H1 (cell line): ENCODE measurements at regions of chr11 and their contacts with region 1.

Region 1: DNA sequence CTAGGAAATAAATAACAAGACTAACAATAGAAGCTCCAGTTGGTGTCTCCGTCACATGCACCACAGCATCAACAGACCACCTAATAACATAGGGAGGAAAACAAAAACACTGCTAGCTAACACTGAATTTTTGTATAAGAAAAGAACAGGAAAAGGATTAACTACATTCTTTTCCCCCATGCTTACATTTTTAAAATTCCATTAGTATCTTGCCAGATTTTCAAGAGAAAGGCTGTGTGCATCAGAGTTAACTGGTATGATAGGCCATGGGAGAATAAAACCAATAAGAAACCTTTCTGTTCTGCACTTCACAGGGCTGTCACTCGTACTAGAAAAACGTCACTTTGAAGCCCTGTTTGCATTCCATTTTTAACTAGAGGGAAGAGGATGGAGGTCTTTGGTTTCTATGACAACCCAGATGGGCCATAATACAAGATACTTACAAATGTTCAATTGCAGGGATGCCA is 79.0 kb downstream of the LARGE2 start:
- DNase-seq: no peak
- H3K4me3 ChIP-seq: peak overlapping the region in 1 of 4 experiments; percentile 40; a peak in 3 of 8 replicates
- H3K27ac ChIP-seq: peak overlapping the region; percentile 87; the same call in 1 of the 2 replicates
- H3K4me1 ChIP-seq: peaks cover 3 to 24% (median 14%) of the 10 kb centered on the region in 4 experiments; a peak in 6 of 7 replicates
- H3K27me3 ChIP-seq: no peaks in the 10 kb centered on the region
- CTCF ChIP-seq: no peak
- EP300 ChIP-seq: peak in 1 of 2 experiments; percentile 87; a peak in 1 of 3 replicates
- POLR2A ChIP-seq: no peak
- RAD21 ChIP-seq: no peak

Region 2: DNA sequence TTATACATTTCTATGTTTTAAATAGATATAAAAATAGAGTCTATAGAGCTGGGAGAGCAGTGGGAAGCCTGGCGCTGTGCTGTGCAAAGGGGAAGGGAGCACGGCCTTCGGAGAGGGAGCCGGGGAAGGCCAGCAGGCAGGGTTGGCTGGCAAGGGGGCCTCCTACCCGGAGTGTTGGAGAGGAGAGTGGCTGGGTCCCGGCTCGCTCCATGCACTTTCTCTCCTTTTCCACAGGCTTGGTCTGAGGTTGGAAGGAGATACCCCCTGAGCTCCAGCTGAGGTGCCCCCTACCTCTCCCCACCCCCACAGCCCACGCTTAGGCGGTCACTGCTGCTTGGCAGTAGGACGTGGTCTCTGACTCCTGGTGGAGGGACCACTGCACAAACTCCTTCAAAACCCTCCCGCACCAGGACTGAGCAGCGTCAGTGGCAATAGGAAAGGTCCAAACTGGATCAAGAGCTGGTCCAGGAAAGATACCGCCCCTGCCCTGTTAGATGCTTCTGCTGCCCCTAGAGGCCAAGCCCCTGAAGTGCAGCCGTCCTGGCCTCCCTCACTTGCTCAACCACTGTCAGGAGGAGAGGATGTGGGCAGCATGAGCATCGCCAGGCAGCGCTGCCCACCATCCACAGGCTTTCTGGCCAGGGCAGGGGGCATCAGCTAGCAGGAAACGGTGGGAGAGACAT is 768.2 kb before region 1 on chr11:
- CTCF ChIA-PET with region 1: no interaction called
- POLR2A ChIA-PET with region 1: no interaction called
- DNase-seq: peak; percentile 53 to 94
- H3K4me3 ChIP-seq: peak overlapping the region in 1 of 4 experiments; percentile 22; a peak in 1 of 8 replicates
- H3K27ac ChIP-seq: no peak overlapping the region
- H3K4me1 ChIP-seq: peaks cover 0 to 4% (median 2%) of the 10 kb centered on the region in 4 experiments; a peak in 2 of 7 replicates
- H3K27me3 ChIP-seq: no peaks in the 10 kb centered on the region
- CTCF ChIP-seq: peak; percentile 73 to 98 (median 94)
- EP300 ChIP-seq: no peak
- POLR2A ChIP-seq: no peak
- RAD21 ChIP-seq: peak; percentile 52 to 59

Region 3: DNA sequence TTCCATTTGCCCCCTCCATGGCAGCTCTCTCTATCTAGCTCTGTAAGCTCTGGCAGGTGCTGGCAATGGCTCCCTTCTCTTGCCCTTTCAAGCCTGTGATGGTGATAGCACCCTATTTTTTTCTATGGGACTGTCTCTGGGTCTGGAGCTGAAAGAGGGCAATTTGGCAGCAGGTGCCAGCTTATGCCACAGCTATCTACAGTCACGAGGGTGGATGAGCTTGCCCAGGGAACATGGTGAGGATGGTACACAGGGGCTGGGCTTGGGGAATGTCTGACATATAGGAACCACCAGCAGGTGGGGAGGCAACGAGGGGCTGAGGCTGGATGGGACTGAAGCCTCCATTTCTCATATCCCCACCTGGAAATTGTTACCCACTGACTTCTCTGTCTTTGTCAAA is 540.0 kb before region 1 on chr11:
- CTCF ChIA-PET with region 1: no interaction called
- POLR2A ChIA-PET with region 1: no interaction called
- DNase-seq: no peak
- H3K4me3 ChIP-seq: no peak overlapping the region
- H3K27ac ChIP-seq: no peak overlapping the region
- H3K4me1 ChIP-seq: no peaks in the 10 kb centered on the region
- H3K27me3 ChIP-seq: no peaks in the 10 kb centered on the region
- CTCF ChIP-seq: no peak
- EP300 ChIP-seq: no peak
- POLR2A ChIP-seq: no peak
- RAD21 ChIP-seq: no peak

Region 4: DNA sequence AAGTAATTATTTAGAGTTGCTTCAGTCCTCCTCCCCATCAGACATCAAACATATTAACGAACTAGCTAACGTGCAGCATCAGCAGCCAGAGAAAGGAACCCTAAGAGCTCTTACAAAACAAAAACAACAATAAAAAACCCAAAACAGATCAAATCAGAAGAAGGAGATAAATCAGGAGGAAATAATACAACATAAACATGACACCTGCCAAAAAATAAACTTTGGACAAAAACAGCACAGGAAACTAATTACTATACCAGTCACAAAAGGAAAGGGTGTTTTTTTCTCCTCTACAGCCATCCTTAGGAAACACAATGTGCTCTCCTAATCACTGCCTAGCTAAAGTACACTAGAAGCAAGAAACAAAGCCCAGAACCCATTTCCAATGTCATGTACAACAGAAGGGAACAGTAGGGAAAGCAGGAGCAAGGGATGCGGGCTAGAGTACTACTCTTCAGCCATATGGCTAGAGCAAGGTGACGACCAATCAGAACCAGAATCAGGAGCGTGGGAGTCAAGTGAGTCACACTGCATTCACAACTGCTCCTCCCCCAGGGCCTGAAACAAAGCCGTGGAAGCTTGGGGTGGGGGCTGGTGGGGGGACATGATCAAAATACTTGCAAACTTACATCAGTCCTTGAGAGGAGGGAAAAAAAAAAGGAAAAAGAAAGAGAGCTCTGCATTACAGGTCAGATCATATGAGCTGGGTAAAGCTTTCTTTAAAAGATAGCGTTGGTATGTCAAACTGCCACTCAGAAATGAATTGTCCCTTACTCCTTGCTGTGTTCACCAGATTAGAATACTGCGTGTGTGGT is 18.6 kb before region 1 on chr11:
- CTCF ChIA-PET with region 1: interaction called, 18 read pairs
- POLR2A ChIA-PET with region 1: interaction called, 74 read pairs
- DNase-seq: peak; percentile 60 to 84
- H3K4me3 ChIP-seq: peak overlapping the region in 1 of 4 experiments; percentile 40; a peak in 4 of 8 replicates
- H3K27ac ChIP-seq: peak overlapping the region; percentile 58; the same call in 1 of the 2 replicates
- H3K4me1 ChIP-seq: peaks cover 5 to 9% (median 9%) of the 10 kb centered on the region in 4 experiments; a peak in 5 of 7 replicates
- H3K27me3 ChIP-seq: no peaks in the 10 kb centered on the region
- CTCF ChIP-seq: no peak
- EP300 ChIP-seq: no peak
- POLR2A ChIP-seq: no peak
- RAD21 ChIP-seq: no peak

Region 5: GRCh38 chr11:46012185-46012584 is 10.7 kb after region 1 on chr11:
- CTCF ChIA-PET with region 1: interaction called, 30 read pairs
- POLR2A ChIA-PET with region 1: interaction called, 14 read pairs
- DNase-seq: no peak
- H3K4me3 ChIP-seq: 0 out of 8 replicates have a peak overlapping the region, but pooled peaks of 1 of the 4 experiments have one; percentile 4
- H3K27ac ChIP-seq: peak overlapping the region; percentile 62; the same call in 1 of the 2 replicates
- H3K4me1 ChIP-seq: peaks cover 0 to 11% (median 3%) of the 10 kb centered on the region in 4 experiments; a peak in 2 of 7 replicates
- H3K27me3 ChIP-seq: no peaks in the 10 kb centered on the region
- CTCF ChIP-seq: no peak
- EP300 ChIP-seq: peak in 1 of 2 experiments; percentile 33; a peak in 1 of 3 replicates
- POLR2A ChIP-seq: no peak
- RAD21 ChIP-seq: no peak